ENCODE measurements at regions of chr17 and their contacts with region 1.

Region 1: DNA sequence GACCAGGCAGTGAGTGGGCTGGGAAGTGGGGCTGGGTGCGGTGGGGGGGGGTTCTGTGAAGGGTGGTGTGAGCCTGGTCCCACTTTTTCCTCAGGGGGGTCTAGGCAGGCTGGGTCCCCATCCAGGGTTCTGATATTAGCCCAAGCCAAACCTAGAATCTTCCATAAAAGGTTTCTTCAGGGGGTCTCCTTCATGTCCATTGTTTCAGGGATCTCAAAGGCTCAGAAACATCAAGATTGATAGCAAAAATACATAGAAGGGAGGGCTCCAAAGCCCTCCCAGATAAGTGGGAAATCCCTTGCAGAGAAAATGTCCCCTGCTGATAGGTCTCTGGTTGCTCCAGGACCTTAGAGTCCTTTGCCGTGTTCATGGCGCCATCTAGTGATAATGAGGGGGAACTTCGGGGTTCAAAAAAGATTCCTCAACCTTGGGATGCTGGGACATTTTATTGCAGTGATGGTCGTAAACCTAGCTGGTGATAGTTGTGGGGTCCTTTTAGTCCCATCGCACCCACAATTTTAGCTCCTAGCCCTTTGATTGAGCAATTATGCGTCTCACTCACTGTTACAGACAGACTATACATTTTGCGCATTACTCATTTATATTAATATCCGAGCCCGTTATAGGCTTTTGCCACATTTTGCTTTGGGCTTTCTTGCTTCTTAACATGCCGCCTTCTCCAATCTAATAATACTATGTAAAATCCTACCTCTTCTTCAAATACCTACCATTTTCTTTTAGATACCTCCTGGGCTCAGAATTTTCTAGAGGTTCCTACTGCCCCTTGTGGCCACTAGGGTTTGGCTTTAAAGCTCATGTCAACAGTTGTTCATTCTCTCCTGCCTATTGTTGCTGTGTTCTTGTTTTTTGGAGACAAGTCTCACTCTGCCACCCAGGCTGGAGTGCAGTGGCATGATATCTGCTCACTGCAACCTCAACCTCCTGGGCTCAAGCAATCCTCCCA is 35.1 kb downstream of the IGF2BP1 start:
- DNase-seq: peak; percentile 65
- ATAC-seq: peak; percentile 79
- H3K4me3 Mint-ChIP-seq: no peak overlapping the region
- H3K27ac Mint-ChIP-seq: no peak overlapping the region
- H3K4me1 Mint-ChIP-seq: peaks cover 6% of the 10 kb centered on the region
- H3K27me3 Mint-ChIP-seq: no peaks in the 10 kb centered on the region

Region 2: GRCh38 chr17:49045376-49045775 is 13.1 kb after region 1 on chr17:
- CTCF ChIA-PET with region 1: interaction called, 11 read pairs
- DNase-seq: no peak
- ATAC-seq: no peak
- H3K4me3 Mint-ChIP-seq: no peak overlapping the region
- H3K27ac Mint-ChIP-seq: no peak overlapping the region
- H3K4me1 Mint-ChIP-seq: no peaks in the 10 kb centered on the region
- H3K27me3 Mint-ChIP-seq: peaks cover 16% of the 10 kb centered on the region

Measured in activated CD8-positive, alpha-beta memory T cell treated with anti-CD3 and anti-CD28 coated beads, Interleukin-2, amount 10 ng/mL, durations not matched to agents 7 days and 5 days (primary cell).